A549 (cell line): ENCODE measurements at regions of chr2 and their contacts with region 1.

Region 1: DNA sequence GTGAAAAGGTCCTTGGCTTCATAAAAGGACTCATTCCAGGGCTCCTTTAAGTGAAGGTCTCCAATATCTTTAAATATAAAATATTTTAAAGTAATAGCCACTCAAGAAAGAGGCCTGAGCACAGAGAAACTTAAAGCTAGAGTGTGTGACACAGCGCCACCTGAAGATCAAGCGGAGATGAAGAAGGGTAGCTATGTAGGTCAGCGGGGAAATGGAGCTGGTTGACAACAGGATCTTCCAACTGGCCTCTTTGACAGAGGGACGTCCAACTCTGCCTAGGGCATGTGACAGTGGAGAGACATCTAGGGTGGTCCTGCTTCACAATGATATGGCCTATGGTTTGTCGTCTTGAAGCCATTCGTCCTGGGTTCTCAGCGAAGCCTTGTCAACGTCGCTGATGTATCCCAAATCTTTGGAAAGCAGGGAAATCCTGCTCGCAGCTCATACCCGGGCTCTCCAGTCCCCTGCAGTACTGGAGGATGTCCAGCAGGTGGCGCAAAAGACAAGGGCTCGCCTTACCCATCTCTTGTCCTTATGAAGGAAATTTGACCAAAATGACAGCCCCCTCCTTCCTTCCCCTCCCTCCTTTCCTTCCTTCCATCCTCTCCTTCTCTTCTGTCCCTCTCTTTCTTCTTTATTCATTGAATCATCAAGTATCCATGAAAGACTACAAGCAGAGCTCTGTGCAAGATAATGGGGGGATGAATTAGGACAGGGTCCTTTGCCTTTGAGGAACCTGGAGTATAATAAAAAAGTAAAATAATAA is 59.6 kb downstream of the LONRF2 start:
- DNase-seq: peak; percentile 60 to 77
- ATAC-seq: peak; percentile 52 to 82; a peak in 5 of 6 replicates
- H3K4me3 ChIP-seq: no peak overlapping the region
- H3K27ac ChIP-seq: peak overlapping the region in 1 of 2 experiments; percentile 62; a peak in 3 of 6 replicates
- H3K4me1 ChIP-seq: peaks cover 9% of the 10 kb centered on the region; the same call in 1 of the 3 replicates
- CTCF ChIP-seq: peak; percentile 91
- EP300 ChIP-seq: no peak
- POLR2A ChIP-seq: no peak
- RAD21 ChIP-seq: peak; percentile 95 to 97

Region 2: DNA sequence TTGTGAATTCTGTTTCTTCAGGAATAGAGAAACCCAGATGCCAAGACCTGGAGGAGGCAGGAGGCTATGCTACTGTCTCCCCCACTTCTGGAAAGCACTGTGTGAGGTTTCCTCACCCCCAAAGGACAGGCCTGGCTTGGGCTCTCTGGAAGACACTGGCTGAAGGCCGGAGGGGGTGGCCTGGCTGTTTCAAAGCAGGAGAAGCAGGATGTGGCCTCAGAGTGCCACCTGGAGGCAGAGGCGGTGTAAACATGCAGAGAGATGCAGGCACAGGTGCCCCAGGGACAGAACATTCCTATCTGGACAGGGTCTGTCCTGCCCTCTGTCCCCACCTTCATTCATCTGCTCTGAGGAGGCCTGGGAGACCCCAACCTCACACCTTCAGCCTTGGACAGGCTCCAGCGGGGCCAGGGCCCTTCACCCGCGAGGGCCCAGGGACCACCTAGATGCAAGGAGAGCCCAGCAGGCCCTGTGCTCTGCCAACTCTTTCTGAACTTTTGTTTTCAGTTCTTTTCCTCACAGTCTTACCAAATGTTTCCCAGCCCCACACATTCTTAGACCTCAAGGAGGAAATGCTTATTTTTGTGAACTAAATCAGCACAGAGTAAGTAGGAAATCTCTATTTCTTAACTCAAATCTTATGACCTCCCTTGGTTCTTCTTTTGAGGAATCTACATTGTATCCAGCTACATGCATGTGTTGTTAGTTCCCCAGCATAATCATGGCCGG is 19.7 kb before region 1 on chr2:
- CTCF ChIA-PET with region 1: interaction called, 35 read pairs
- POLR2A ChIA-PET with region 1: no interaction called
- DNase-seq: peak; percentile 43 to 51
- ATAC-seq: peak; percentile 80 to 90; a peak in 5 of 6 replicates
- H3K4me3 ChIP-seq: no peak overlapping the region
- H3K27ac ChIP-seq: no peak overlapping the region
- H3K4me1 ChIP-seq: no peaks in the 10 kb centered on the region
- CTCF ChIP-seq: peak; percentile 76
- EP300 ChIP-seq: no peak
- POLR2A ChIP-seq: no peak
- RAD21 ChIP-seq: peak; percentile 86 to 90

Region 3: GRCh38 chr2:100291120-100291970 is 28.6 kb after region 1 on chr2:
- CTCF ChIA-PET with region 1: interaction called, 93 read pairs
- POLR2A ChIA-PET with region 1: interaction called, 7 read pairs
- DNase-seq: peak; percentile 90 to 99
- ATAC-seq: peak; percentile 91 to 93
- H3K4me3 ChIP-seq: peak overlapping the region; percentile 22
- H3K27ac ChIP-seq: peak overlapping the region; percentile 98 to 99
- H3K4me1 ChIP-seq: peaks cover 47% of the 10 kb centered on the region
- CTCF ChIP-seq: no peak
- EP300 ChIP-seq: peak; percentile 86 to 93; a peak in 4 of 5 replicates
- POLR2A ChIP-seq: no peak
- RAD21 ChIP-seq: peak; percentile 18 to 47; a peak in 3 of 5 replicates

Region 4: DNA sequence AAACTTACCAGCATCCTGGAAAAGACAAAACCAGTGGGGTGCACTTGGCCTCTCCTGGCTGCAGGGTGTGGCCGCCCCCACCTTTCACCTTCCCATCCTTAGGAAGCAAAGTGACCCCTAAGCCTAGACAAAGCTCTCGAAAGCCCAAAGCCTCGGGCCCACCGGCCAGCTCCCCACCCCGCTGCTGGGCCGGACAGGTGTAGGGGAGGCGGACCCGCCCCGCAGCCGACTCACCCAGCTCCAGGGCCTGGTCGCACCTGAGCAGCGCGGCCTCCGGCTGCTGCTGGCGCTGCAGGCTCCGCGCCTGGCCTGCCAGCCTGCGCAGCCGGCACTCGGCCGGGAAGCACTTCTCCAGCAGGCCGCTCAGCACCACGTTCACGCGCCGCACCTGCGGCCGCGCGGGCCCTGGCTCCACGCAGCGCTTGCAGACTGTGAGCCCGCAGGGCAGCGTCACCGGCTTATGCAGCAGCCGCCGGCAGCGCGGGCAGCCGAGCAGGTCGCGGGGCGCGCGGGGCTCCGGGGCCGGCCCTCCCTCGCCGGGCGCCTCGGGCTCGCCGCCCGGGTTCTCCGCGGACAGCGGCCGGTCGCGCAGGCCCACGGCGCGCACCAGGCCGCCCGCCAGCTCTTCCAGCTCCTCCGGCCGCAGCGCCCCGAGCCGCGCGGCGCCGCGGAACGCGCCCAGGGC is 58.6 kb after region 1 on chr2:
- CTCF ChIA-PET with region 1: interaction called, 52 read pairs
- POLR2A ChIA-PET with region 1: interaction called, 3 read pairs
- DNase-seq: peak; percentile 40 to 77
- ATAC-seq: peak; percentile 81 to 86
- H3K4me3 ChIP-seq: peak overlapping the region; percentile 88
- H3K27ac ChIP-seq: peak overlapping the region; percentile 92 to 94
- H3K4me1 ChIP-seq: peaks cover 14% of the 10 kb centered on the region; the same call in 1 of the 3 replicates
- CTCF ChIP-seq: peak; percentile 26; the same call in 1 of the 3 replicates
- EP300 ChIP-seq: no peak
- POLR2A ChIP-seq: peak; percentile 66
- RAD21 ChIP-seq: no peak

Region 5: GRCh38 chr2:100381240-100381639 is 118.5 kb after region 1 on chr2:
- CTCF ChIA-PET with region 1: interaction called, 188 read pairs
- POLR2A ChIA-PET with region 1: no interaction called
- DNase-seq: peak; percentile 31 to 81
- ATAC-seq: peak; percentile 80 to 92
- H3K4me3 ChIP-seq: no peak overlapping the region
- H3K27ac ChIP-seq: peak overlapping the region in 1 of 2 experiments; percentile 40; a peak in 2 of 6 replicates
- H3K4me1 ChIP-seq: 0 out of 3 replicates have a peak, but pooled peaks cover 2% of the 10 kb centered on the region
- CTCF ChIP-seq: peak; percentile 84
- EP300 ChIP-seq: no peak
- POLR2A ChIP-seq: no peak
- RAD21 ChIP-seq: peak; percentile 82 to 90

Region 6: DNA sequence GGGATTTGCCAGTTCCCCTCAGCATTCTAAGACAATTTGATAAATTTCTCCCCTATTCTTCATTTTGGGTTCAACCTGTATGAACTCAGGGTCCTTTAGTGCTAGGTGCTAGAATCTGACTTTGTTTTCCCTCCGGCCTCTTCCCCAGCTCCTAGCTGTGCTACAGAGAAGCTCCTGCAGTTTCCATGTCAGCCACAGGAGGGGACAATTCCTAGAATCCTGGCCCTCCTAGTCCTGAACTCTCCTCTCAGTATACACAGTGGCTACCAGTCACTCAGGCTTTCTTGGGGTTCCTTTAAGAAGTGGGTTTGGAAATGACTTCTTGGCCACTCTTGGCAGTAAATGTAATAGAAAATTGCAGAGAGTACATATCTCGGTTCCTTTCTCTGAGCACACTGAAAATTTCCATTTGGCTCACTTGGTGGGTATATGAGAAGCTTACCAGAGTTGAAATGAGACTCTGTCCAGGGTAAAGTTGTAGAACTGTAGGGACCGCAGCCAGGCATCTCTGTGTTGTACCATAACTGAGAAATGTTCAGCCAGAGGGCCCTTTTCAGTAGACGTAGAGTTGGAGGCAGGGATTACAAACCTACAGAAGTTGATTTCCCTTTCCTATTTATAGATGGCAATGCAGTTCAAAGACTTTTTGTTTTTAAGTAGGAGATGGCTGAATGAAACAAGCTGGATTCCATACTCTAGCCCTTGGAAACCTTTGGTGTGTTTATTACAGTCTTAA is 159.8 kb after region 1 on chr2:
- CTCF ChIA-PET with region 1: interaction called, 12 read pairs
- POLR2A ChIA-PET with region 1: interaction called, 3 read pairs
- DNase-seq: peak; percentile 50 to 66
- ATAC-seq: peak; percentile 82 to 95
- H3K4me3 ChIP-seq: no peak overlapping the region
- H3K27ac ChIP-seq: no peak overlapping the region
- H3K4me1 ChIP-seq: no peaks in the 10 kb centered on the region
- CTCF ChIP-seq: peak; percentile 20; the same call in 2 of the 3 replicates
- EP300 ChIP-seq: no peak
- POLR2A ChIP-seq: no peak
- RAD21 ChIP-seq: no peak